ENCODE measurements at regions of chr12 and their contacts with region 1.

Region 1: DNA sequence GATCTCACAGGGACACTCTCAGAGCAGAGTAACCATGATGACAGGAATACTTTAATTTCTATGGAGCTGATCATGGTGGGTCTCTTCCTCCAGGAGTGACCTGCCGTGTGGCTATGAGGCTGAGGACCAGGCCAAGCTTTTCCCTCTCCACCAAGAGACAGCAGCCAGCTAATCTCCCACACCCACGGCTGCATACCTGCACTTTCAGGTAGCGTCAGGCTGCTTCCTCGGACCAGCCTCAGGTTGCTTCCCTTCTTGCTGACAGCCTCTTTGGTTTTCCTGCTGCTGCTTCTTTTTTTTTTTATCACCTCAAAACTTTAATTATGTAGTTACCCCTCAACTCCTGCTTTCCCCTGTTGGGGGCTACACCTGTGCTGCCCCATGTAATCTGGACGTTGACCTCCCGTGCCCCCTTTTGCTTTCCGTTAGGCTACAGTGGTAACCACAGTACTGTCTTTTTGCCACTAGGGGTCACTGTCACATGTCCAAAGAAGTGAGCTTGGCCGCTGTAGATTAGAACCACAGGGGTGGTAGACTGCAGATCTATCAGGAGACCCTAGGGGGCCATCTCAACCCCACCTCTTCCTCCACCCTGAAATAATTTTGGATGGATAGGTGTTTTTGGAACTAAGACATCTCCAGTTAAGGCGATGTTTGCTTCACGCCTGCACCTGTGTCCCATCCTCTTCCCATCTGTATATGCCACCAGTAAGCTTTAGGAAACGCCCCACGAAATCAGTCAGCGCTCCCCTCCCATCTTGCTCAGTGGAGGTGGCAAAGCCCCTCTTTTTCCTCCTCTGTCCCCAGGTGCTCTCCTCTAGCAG is 7.8 kb upstream of the PIP4K2C start:
- DNase-seq: peak; percentile 76
- ATAC-seq: peak; percentile 99
- H3K4me3 ChIP-seq: no peak overlapping the region
- H3K27ac ChIP-seq: no peak overlapping the region
- H3K4me1 ChIP-seq: no peaks in the 10 kb centered on the region
- H3K27me3 ChIP-seq: no peaks in the 10 kb centered on the region
- CTCF ChIP-seq: peak; percentile 95 to 99 (median 98)
- POLR2A ChIP-seq: no peak
- RAD21 ChIP-seq: peak; percentile 93

Region 2: GRCh38 chr12:57435293-57435692 is 147.9 kb before region 1 on chr12:
- CTCF ChIA-PET with region 1: no interaction called
- POLR2A ChIA-PET with region 1: no interaction called
- RAD21 ChIA-PET with region 1: no interaction called
- intact Hi-C with region 1: no loop called
- DNase-seq: no peak
- ATAC-seq: no peak
- H3K4me3 ChIP-seq: no peak overlapping the region
- H3K27ac ChIP-seq: no peak overlapping the region
- H3K4me1 ChIP-seq: peaks cover 4 to 10% of the 10 kb centered on the region in 2 experiments; a peak in 3 of 4 replicates
- H3K27me3 ChIP-seq: no peaks in the 10 kb centered on the region
- CTCF ChIP-seq: no peak
- POLR2A ChIP-seq: no peak
- RAD21 ChIP-seq: no peak

Region 3: DNA sequence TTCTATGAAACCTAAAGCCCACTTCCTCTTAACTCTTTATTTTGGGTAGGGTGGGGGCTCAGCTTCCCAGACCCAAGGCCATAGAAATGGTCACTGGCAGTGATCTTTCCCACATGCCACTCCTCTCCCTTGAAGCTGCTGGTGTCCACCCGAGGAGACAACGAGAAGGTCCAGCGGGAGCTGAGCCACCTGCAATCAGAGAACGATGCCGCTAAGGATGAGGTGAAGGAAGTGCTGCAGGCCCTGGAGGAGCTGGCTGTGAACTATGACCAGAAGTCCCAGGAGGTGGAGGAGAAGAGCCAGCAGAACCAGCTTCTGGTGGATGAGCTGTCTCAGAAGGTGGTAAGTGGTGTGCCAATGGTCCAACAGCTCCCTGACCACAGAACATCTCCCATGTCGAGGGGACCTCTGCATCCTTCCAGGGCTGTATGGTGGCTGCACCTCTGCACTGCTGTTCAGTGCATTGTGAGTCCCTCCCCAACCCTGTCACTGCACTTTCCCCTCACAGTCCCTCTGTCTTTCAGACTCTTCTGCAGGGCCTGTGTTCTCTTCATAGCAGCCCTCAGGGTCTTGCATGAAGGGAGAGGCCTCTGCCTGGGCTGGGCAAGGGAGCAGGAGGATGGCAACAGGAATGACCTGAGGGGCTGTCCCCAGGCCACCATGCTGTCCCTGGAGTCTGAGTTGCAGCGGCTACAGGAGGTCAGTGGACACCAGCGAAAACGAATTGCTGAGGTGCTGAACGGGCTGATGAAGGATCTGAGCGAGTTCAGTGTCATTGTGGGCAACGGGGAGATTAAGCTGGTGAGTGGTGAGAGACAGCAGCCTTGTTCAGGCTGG is 11.1 kb before region 1 on chr12:
- CTCF ChIA-PET with region 1: interaction called, 12 read pairs
- POLR2A ChIA-PET with region 1: no interaction called
- RAD21 ChIA-PET with region 1: no interaction called
- intact Hi-C with region 1: no loop called
- DNase-seq: no peak
- ATAC-seq: no peak
- H3K4me3 ChIP-seq: no peak overlapping the region
- H3K27ac ChIP-seq: no peak overlapping the region
- H3K4me1 ChIP-seq: no peaks in the 10 kb centered on the region
- H3K27me3 ChIP-seq: no peaks in the 10 kb centered on the region
- CTCF ChIP-seq: no peak
- POLR2A ChIP-seq: no peak
- RAD21 ChIP-seq: no peak

Region 4: GRCh38 chr12:57621497-57622292 is 38.5 kb after region 1 on chr12:
- CTCF ChIA-PET with region 1: interaction called, 3 read pairs
- POLR2A ChIA-PET with region 1: no interaction called
- RAD21 ChIA-PET with region 1: no interaction called
- intact Hi-C with region 1: loop called (anchors 1 kb)
- DNase-seq: peak; percentile 15
- ATAC-seq: peak; percentile 84
- H3K4me3 ChIP-seq: no peak overlapping the region
- H3K27ac ChIP-seq: no peak overlapping the region
- H3K4me1 ChIP-seq: no peaks in the 10 kb centered on the region
- H3K27me3 ChIP-seq: peaks cover 4% of the 10 kb centered on the region; the same call in 1 of the 2 replicates
- CTCF ChIP-seq: peak; percentile 79 to 91 (median 84)
- POLR2A ChIP-seq: no peak
- RAD21 ChIP-seq: peak; percentile 75

Region 5: GRCh38 chr12:57632694-57633477 is 49.7 kb after region 1 on chr12 and contains the start of gene B4GALNT1:
- CTCF ChIA-PET with region 1: interaction called, 8 read pairs
- POLR2A ChIA-PET with region 1: no interaction called
- RAD21 ChIA-PET with region 1: interaction called in 1 of 2 experiments, 5 read pairs
- intact Hi-C with region 1: loop called (anchors 1 kb)
- DNase-seq: peak; percentile 46
- ATAC-seq: peak; percentile 87
- H3K4me3 ChIP-seq: peak within 1 kb of the TSS; percentile 71 to 92
- H3K27ac ChIP-seq: peak within 1 kb of the TSS; percentile 77
- H3K4me1 ChIP-seq: peaks cover 12 to 21% of the 10 kb centered on the region in 2 experiments
- H3K27me3 ChIP-seq: no peaks in the 10 kb centered on the region
- CTCF ChIP-seq: peak; percentile 74 to 84 (median 77); a peak in 5 of 6 replicates
- POLR2A ChIP-seq: no peak
- RAD21 ChIP-seq: peak; percentile 49
- total RNA-seq, gene B4GALNT1: 31.3 TPM

Region 6: GRCh38 chr12:57693659-57694458 is 110.6 kb after region 1 on chr12 and contains the start of gene OS9:
- CTCF ChIA-PET with region 1: interaction called, 3 read pairs
- POLR2A ChIA-PET with region 1: no interaction called
- RAD21 ChIA-PET with region 1: no interaction called
- intact Hi-C with region 1: loop called (anchors 5 kb)
- DNase-seq: peak; percentile 100
- ATAC-seq: peak; percentile 97
- H3K4me3 ChIP-seq: peak within 1 kb of the TSS; percentile 95
- H3K27ac ChIP-seq: no peak within 1 kb of the TSS; the same call in 1 of the 2 replicates
- H3K4me1 ChIP-seq: peaks cover 4 to 10% of the 10 kb centered on the region in 2 experiments; a peak in 3 of 4 replicates
- H3K27me3 ChIP-seq: no peaks in the 10 kb centered on the region
- CTCF ChIP-seq: peak; percentile 66 to 75 (median 69); a peak in 5 of 6 replicates
- POLR2A ChIP-seq: peak; percentile 68
- RAD21 ChIP-seq: peak; percentile 62
- total RNA-seq, gene OS9: 98.4 TPM

Region 7: DNA sequence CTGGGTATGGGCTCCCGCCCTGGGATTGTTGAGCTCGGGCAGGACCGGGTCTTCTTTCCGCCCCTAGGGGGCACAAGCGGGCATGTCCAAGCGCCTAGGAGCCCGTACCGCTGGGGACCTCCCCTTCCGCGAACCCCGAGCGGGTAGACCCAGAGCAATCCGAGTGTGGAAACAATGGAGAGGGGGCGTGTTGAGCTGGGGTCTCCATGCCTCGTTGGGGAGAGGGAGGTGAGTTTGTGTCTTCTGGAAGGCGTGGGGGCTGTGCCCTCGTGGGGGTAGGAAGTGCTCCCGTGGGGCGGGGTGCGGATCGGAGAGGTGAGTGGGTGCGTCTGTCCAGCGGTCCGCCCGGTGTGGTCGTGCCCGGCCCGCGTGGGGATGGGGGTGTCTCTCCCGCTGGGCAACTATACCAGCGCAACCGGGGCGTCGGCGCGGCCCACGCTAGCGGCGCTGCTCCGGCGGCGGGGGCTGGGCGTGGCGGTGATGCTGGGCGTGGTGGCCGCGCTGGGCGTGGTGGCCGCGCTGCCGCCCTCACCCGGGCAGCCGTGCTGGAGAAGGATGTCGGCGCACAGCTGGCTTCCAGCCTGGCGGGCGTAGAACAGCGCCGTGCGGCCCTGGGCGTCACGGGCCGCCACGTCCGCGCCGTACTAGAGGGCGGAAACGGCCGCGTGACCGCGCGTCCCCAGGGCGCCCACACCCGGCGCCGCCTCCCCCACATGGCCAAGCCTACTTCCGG is 143.1 kb after region 1 on chr12:
- CTCF ChIA-PET with region 1: interaction called, 15 read pairs
- POLR2A ChIA-PET with region 1: no interaction called
- RAD21 ChIA-PET with region 1: no interaction called
- intact Hi-C with region 1: no loop called
- DNase-seq: peak; percentile 72
- ATAC-seq: peak; percentile 94
- H3K4me3 ChIP-seq: peak overlapping the region; percentile 85 to 89
- H3K27ac ChIP-seq: peak overlapping the region; percentile 92
- H3K4me1 ChIP-seq: peaks cover 7 to 18% of the 10 kb centered on the region in 2 experiments; a peak in 3 of 4 replicates
- H3K27me3 ChIP-seq: no peaks in the 10 kb centered on the region
- CTCF ChIP-seq: peak; percentile 76 to 95 (median 83)
- POLR2A ChIP-seq: no peak
- RAD21 ChIP-seq: peak; percentile 57

Region 8: GRCh38 chr12:57744777-57745484 is 161.7 kb after region 1 on chr12 and contains the start of gene TSPAN31:
- CTCF ChIA-PET with region 1: interaction called, 13 read pairs
- POLR2A ChIA-PET with region 1: no interaction called
- RAD21 ChIA-PET with region 1: interaction called in 1 of 2 experiments, 3 read pairs
- intact Hi-C with region 1: loop called (anchors 1 kb)
- DNase-seq: peak; percentile 98
- ATAC-seq: peak; percentile 83
- H3K4me3 ChIP-seq: peak within 1 kb of the TSS; percentile 69 to 76
- H3K27ac ChIP-seq: peak within 1 kb of the TSS; percentile 76
- H3K4me1 ChIP-seq: peaks cover 10 to 36% of the 10 kb centered on the region in 2 experiments; a peak in 3 of 4 replicates
- H3K27me3 ChIP-seq: no peaks in the 10 kb centered on the region
- CTCF ChIP-seq: no peak
- POLR2A ChIP-seq: peak; percentile 49
- RAD21 ChIP-seq: no peak
- total RNA-seq, gene TSPAN31: 14.9 TPM

Measured in HCT116 (cell line).